Activated naive CD4-positive, alpha-beta T cell treated with anti-CD3 and anti-CD28 coated beads, Interleukin-2, amount 10 ng/mL, durations not matched to agents 7 days and 5 days (primary cell): ENCODE measurements at regions of chr6 and their contacts with region 1.

Region 1: DNA sequence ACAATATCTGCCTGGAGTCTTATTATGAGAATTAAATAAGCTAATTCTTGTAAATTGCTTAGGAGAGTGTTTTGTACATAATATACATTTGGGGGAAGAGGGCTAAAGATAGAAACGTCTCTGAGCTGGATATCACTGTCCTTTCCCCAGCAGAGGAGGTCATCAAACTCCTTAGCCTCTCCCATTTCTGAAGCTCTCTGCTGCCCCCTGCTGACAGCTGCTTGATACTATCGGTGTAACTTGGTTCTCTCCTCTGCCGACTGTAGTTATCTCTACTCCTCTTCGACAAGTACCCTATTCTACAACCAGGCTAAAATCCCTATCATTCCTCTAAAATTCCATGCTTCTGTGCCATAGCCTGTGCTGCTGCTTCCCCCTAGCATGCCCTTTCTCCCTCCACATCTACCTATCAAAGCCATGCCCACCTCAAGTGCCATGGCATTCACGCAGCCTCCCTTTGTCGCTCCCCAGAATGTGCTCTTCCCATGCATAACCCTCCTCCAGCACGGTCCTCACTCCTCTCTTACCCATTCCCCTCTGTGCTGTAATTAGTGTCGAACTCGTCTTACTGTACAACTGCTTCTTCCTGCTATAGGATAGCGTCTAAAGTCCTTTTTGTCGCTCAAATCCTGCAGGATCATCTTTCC is 101.2 kb downstream of the EPM2A start:
- DNase-seq: peak; percentile 87
- H3K4me3 Mint-ChIP-seq: no peak overlapping the region
- H3K27ac Mint-ChIP-seq: no peak overlapping the region
- H3K4me1 Mint-ChIP-seq: no peaks in the 10 kb centered on the region
- H3K27me3 Mint-ChIP-seq: no peaks in the 10 kb centered on the region

Region 2: GRCh38 chr6:145623232-145623631 is 10.9 kb before region 1 on chr6:
- CTCF ChIA-PET with region 1: interaction called, 10 read pairs
- DNase-seq: no peak
- H3K4me3 Mint-ChIP-seq: no peak overlapping the region
- H3K27ac Mint-ChIP-seq: no peak overlapping the region
- H3K4me1 Mint-ChIP-seq: peaks cover 4% of the 10 kb centered on the region
- H3K27me3 Mint-ChIP-seq: no peaks in the 10 kb centered on the region